ENCODE measurements at regions of chr2 and their contacts with region 1.

Region 1: DNA sequence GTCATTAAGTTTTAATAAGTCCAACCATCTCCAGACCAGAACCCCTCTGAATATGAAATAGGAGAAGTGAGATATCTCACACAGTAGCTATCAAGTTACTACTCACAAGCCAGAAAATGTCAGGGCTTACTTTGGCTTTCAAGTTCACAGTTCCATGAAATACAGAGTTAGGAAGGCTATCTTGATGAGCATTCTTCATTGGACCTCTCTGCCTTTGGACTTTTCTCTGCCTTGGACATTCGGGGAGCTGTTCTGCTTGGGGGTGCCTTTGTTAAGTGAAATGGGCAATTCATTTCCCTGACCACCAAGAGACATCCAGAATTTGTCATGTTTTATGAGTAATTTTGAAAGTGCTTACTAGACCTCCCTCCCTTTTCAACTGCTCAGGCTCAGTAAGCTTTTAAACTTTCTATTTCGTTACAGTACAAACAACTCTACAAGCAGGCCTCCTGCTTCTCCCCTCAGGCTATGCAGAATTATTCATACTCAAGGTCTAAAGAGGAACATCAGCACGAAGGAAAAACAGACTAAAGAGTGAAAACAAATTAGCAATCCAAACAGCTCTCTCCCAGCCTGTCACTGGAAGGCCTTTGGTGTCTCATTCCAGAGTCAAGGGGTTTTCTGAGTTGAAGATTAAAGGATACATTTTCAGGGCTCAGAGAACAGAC is 95.3 kb downstream of the MREG start:
- DNase-seq: peak; percentile 54
- CTCF ChIP-seq: no peak

Region 2: GRCh38 chr2:215442404-215442794 is 475.7 kb before region 1 on chr2:
- in situ Hi-C with region 1: loop called (anchors 10 kb)
- DNase-seq: no peak
- CTCF ChIP-seq: peak; percentile 18

Region 3: DNA sequence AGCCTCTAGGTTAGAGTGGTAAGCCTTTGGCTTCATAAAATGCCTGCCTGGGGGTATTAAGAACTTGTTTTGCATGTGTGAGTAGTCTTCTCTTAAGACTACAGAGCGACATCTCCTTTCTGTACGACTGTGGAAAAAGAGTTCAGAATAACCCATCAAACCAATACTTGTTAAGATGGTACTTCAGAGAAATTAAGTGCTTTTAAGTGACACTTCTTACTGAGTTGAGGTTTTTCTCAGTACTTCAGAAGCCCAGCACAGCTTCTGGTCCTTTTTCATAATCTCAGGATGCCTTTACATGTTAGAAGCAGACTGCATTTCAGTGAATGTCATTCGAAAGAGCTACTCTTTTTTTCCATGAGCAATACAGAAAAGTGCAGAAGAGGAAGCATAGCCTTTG is 201.9 kb after region 1 on chr2:
- in situ Hi-C with region 1: no loop called
- DNase-seq: no peak
- CTCF ChIP-seq: no peak

Measured in GM13977 (cell line).